Activated T-helper 1 cell treated with anti-CD3 and anti-CD28 coated beads, Interleukin-12 subunit alpha, Interleukin-12 subunit beta, Interleukin-2, Interleukin-4 antibody, amounts not matched to agents 30 ng/mL and 10 ng/mL and 1 ng/mL, durations not matched to agents 14 hours and 24 hours and 36 hours (primary cell): ENCODE measurements at regions of chr3 and their contacts with region 1.

Region 1: DNA sequence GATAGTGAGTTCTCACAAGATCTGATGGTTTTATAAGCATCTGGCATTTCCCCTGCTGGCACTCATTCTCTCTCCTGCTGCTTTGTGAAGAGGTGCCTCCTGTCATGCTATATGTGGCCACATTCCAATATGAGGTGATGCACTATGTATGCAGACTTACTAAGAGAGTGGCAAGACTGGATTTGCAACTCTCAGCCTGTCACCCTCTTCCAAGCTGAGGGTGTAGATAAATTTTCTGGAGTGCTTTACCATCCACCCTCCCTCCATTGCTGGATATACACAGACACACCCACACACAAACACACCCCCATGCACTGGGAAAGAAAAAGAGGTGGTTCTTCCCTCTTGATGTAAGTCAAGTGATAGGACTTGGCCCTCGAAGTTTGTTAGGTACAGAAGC is 30.2 kb upstream of the CHMP2B start:
- DNase-seq: no peak
- H3K4me3 Mint-ChIP-seq: no peak overlapping the region
- H3K27ac Mint-ChIP-seq: no peak overlapping the region
- H3K4me1 Mint-ChIP-seq: no peaks in the 10 kb centered on the region
- H3K27me3 Mint-ChIP-seq: no peaks in the 10 kb centered on the region

Region 2: GRCh38 chr3:87145553-87145952 is 51.3 kb before region 1 on chr3:
- intact Hi-C with region 1: loop called (anchors 1 kb)
- DNase-seq: no peak
- H3K4me3 Mint-ChIP-seq: no peak overlapping the region
- H3K27ac Mint-ChIP-seq: no peak overlapping the region
- H3K4me1 Mint-ChIP-seq: no peaks in the 10 kb centered on the region
- H3K27me3 Mint-ChIP-seq: no peaks in the 10 kb centered on the region